ENCODE measurements at regions of chr2 and their contacts with region 1.

Region 1: DNA sequence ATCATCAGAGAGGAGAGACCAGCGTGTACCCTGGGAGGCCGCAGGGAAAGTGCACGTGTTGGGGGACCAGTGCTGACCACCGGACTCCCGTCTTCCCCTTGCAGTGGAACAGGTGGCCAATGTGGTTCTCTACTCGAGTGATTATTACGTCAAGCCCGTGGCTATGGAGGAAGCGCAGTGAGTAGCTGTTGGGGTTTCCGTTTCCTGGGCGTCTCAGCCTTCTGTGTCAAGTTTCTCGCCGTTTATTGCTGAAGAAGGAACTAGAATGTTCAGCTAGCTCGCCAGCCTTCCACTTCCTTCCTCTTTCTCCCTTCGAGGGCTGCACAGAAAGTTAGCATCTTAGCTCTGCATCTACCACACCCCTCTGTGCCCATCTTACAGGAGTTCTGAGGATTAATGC is 22.8 kb upstream of the DGKD start:
- DNase-seq: peak; percentile 96
- ATAC-seq: peak; percentile 91
- H3K4me3 ChIP-seq: peak overlapping the region in 2 of 5 experiments; percentile 19 to 32
- H3K4me3 Mint-ChIP-seq: peak overlapping the region; percentile 73
- H3K27ac ChIP-seq: peak overlapping the region; percentile 92 to 97
- H3K27ac Mint-ChIP-seq: peak overlapping the region; percentile 94
- H3K4me1 ChIP-seq: peaks cover 66 to 78% of the 10 kb centered on the region in 2 donors
- H3K4me1 Mint-ChIP-seq: peaks cover 79% of the 10 kb centered on the region
- H3K27me3 ChIP-seq: no peaks in the 10 kb centered on the region
- H3K27me3 Mint-ChIP-seq: no peaks in the 10 kb centered on the region
- CTCF ChIP-seq: no peak

Region 2: GRCh38 chr2:233168445-233168844 is 163.1 kb before region 1 on chr2:
- CTCF ChIA-PET with region 1: no interaction called
- POLR2A ChIA-PET with region 1: no interaction called
- intact Hi-C with region 1: no loop called
- DNase-seq: no peak
- ATAC-seq: no peak
- H3K4me3 ChIP-seq: no peak overlapping the region
- H3K4me3 Mint-ChIP-seq: no peak overlapping the region
- H3K27ac ChIP-seq: no peak overlapping the region
- H3K27ac Mint-ChIP-seq: no peak overlapping the region
- H3K4me1 ChIP-seq: no peaks in the 10 kb centered on the region
- H3K4me1 Mint-ChIP-seq: no peaks in the 10 kb centered on the region
- H3K27me3 ChIP-seq: no peaks in the 10 kb centered on the region
- H3K27me3 Mint-ChIP-seq: no peaks in the 10 kb centered on the region
- CTCF ChIP-seq: no peak

Region 3: DNA sequence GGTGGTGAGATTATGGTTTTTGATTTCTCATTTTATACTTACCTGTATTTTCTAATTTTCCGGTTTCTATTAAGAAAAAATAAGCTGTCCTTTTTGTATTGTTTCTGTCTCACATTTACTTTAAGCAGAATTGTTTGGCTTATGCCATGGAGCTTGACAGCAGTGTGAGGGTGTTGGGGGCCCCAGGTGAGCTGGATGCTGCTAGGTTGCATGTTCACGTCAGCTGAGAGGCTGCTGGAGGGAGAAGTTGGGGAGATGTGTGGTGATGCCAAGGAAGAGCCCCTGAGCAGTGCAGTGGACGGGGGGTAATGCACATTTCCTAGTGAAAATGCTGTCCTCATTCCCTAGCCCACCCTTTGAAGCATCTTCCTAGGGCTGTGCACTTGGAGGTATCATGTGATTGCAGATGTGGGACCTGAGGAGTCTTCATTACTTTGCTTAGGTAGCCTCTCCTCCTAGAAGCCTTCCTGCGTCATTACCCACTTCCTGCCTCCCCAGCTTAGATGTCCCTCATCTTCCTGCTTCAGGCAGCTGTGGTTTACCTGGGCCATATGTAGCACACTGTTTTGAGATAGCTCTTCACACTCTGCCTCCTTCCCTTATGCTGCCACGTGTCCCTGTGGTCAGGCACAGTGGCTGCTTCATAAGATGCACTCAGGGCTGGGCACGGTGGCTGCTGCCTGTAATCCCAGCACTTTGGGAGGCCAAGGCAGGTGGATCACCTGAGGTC is 63.9 kb before region 1 on chr2:
- CTCF ChIA-PET with region 1: interaction called, 6 read pairs
- POLR2A ChIA-PET with region 1: no interaction called
- intact Hi-C with region 1: loop called (anchors 2 kb)
- DNase-seq: peak; percentile 78
- ATAC-seq: peak; percentile 94
- H3K4me3 ChIP-seq: no peak overlapping the region
- H3K4me3 Mint-ChIP-seq: peak overlapping the region; percentile 48
- H3K27ac ChIP-seq: peak overlapping the region; percentile 57 to 73
- H3K27ac Mint-ChIP-seq: peak overlapping the region; percentile 75
- H3K4me1 ChIP-seq: peaks cover 30 to 38% of the 10 kb centered on the region in 2 donors
- H3K4me1 Mint-ChIP-seq: peaks cover 49% of the 10 kb centered on the region
- H3K27me3 ChIP-seq: no peaks in the 10 kb centered on the region
- H3K27me3 Mint-ChIP-seq: no peaks in the 10 kb centered on the region
- CTCF ChIP-seq: no peak

Region 4: GRCh38 chr2:233278921-233279320 is 52.6 kb before region 1 on chr2:
- CTCF ChIA-PET with region 1: no interaction called
- POLR2A ChIA-PET with region 1: no interaction called
- intact Hi-C with region 1: no loop called
- DNase-seq: no peak
- ATAC-seq: no peak
- H3K4me3 ChIP-seq: no peak overlapping the region
- H3K4me3 Mint-ChIP-seq: no peak overlapping the region
- H3K27ac ChIP-seq: no peak overlapping the region
- H3K27ac Mint-ChIP-seq: no peak overlapping the region
- H3K4me1 ChIP-seq: no peaks in the 10 kb centered on the region
- H3K4me1 Mint-ChIP-seq: peaks cover 8% of the 10 kb centered on the region
- H3K27me3 ChIP-seq: no peaks in the 10 kb centered on the region
- H3K27me3 Mint-ChIP-seq: no peaks in the 10 kb centered on the region
- CTCF ChIP-seq: no peak

Region 5: GRCh38 chr2:233346930-233347329 is 15.4 kb after region 1 on chr2:
- CTCF ChIA-PET with region 1: interaction called, 17 read pairs
- POLR2A ChIA-PET with region 1: interaction called, 25 read pairs
- intact Hi-C with region 1: loop called (anchors 1 kb)
- DNase-seq: no peak
- ATAC-seq: no peak
- H3K4me3 ChIP-seq: no peak overlapping the region
- H3K4me3 Mint-ChIP-seq: no peak overlapping the region
- H3K27ac ChIP-seq: no peak overlapping the region
- H3K27ac Mint-ChIP-seq: peak overlapping the region; percentile 38
- H3K4me1 ChIP-seq: peaks cover 42 to 52% of the 10 kb centered on the region in 2 donors
- H3K4me1 Mint-ChIP-seq: peaks cover 61% of the 10 kb centered on the region
- H3K27me3 ChIP-seq: no peaks in the 10 kb centered on the region
- H3K27me3 Mint-ChIP-seq: no peaks in the 10 kb centered on the region
- CTCF ChIP-seq: no peak

Region 6: GRCh38 chr2:233369897-233370685 is 38.6 kb after region 1 on chr2:
- CTCF ChIA-PET with region 1: no interaction called
- POLR2A ChIA-PET with region 1: no interaction called
- intact Hi-C with region 1: no loop called
- DNase-seq: no peak
- ATAC-seq: peak; percentile 58
- H3K4me3 ChIP-seq: peak overlapping the region in 2 of 5 experiments; percentile 10 to 14
- H3K4me3 Mint-ChIP-seq: peak overlapping the region; percentile 70
- H3K27ac ChIP-seq: peak overlapping the region; percentile 31 to 57
- H3K27ac Mint-ChIP-seq: peak overlapping the region; percentile 84
- H3K4me1 ChIP-seq: peaks cover 54 to 64% of the 10 kb centered on the region in 2 donors
- H3K4me1 Mint-ChIP-seq: peaks cover 67% of the 10 kb centered on the region
- H3K27me3 ChIP-seq: no peaks in the 10 kb centered on the region
- H3K27me3 Mint-ChIP-seq: no peaks in the 10 kb centered on the region
- CTCF ChIP-seq: no peak

Region 7: GRCh38 chr2:233380132-233380895 is 48.8 kb after region 1 on chr2:
- CTCF ChIA-PET with region 1: no interaction called
- POLR2A ChIA-PET with region 1: interaction called, 8 read pairs
- intact Hi-C with region 1: loop called (anchors 2 kb)
- DNase-seq: peak; percentile 82
- ATAC-seq: peak; percentile 86
- H3K4me3 ChIP-seq: peak overlapping the region in 2 of 5 experiments; percentile 22 to 52
- H3K4me3 Mint-ChIP-seq: peak overlapping the region; percentile 73
- H3K27ac ChIP-seq: peak overlapping the region; percentile 89 to 93
- H3K27ac Mint-ChIP-seq: peak overlapping the region; percentile 80
- H3K4me1 ChIP-seq: peaks cover 75 to 81% of the 10 kb centered on the region in 2 donors
- H3K4me1 Mint-ChIP-seq: peaks cover 82% of the 10 kb centered on the region
- H3K27me3 ChIP-seq: no peaks in the 10 kb centered on the region
- H3K27me3 Mint-ChIP-seq: no peaks in the 10 kb centered on the region
- CTCF ChIP-seq: no peak

Measured in B cell (primary cell).